Sciatic nerve (tissue), 2 donors: ENCODE measurements at regions of chr4 and their contacts with region 1.

Region 1: GRCh38 chr4:130306566-130306965 is 1210.6 kb downstream of the C4orf33 start:
- DNase-seq: no peak
- ATAC-seq: no peak

Region 2: DNA sequence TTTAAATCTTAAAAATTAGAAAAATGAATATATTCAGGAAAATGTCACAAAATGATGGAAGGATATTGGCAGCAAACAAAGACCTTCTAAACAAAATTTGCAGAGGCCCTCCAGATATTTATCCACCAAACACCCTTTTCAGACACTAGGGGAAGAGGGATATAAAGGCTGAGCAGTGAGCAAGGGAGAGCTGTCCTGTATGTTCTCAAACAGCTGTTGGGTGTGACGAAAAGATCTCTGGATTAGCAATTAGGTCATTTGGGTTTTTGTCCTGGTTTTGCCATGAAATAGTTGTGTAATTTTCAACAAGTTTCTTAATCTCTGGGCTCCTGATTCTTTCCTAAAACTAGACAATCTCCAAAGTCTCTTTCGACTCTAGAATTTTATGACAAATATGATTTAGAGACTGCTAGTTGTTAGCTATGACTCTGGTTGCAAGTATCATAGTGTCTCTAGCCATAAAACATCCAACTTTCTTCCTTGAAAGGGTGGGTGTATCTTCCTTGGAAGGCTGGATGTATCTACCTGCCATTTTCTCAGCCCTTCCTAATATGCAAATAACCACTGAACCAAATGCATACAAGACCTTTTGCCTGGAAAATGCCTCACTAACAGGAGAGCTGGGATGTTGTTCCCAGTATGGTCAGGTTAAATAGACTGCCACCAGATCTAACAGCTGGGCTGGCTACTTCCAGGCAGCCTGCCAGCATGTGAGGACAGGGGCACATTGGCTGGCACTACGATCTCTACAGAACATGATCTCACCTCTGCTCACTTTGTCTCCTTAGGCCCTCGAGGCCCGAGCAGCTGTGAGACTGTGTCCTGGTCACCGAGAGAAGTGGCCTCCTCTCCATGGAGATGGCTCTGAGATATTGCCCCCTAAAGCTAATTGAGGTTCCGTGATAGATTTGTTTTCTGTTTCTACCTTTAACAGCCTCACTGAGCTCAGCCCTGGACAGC is 1722.5 kb before region 1 on chr4:
- intact Hi-C with region 1: loop called (anchors 10 kb)
- DNase-seq: no peak
- ATAC-seq: no peak

Region 3: DNA sequence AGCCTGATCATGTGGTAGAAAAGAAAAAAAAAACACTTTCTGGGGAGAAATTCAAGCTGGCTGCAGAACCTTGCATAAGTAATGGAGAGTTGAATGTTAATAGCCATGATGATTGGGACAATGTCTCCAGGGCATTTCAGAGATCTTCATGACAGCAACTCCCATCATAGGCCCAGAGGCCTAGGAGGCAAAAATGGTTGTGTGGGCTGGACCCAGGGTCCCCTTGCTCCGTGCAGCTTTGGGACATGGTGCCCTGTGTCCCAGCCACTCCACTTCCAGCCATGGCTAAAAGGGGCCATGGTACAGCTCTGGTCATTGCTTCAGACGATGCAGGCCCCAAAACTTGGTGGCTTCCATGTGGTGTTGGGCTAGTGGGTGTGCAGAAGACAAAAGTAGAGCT is 39.8 kb before region 1 on chr4:
- intact Hi-C with region 1: no loop called
- DNase-seq: no peak
- ATAC-seq: no peak